Dendritic cell treated with granulocyte-macrophage colony-stimulating factor and Interleukin-4, amounts not matched to agents 40 ng/mL and 50 ng/mL, for 4 days (primary cell): ENCODE measurements at regions of chr7 and their contacts with region 1.

Region 1: DNA sequence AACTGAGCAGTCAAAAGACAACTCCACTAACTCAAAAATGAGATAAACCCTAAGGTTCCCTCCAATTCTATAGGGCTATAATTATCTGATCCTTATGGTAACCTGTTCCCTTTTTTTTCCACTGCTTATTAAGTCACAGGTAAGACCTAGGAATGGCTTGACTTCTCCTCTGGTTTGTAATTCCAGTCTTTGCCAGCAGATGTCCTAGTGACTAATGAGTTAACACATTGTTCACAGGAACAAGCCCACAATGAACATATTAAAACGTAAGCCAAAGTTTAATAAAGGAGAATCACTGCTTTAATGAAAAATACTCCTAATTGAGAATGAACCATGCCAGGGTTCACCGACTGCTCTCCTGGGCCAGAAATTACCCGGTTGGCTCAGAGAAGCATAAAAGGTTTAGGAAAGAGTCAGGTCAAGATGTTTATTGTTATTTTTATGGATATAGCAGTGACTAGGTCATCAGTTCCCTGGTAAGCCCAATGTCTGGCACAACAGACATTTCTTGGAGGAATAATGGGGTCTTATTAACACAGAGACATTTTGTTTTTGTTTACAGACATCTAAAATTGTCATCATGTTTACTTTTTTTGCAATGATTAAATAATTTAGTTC is 120.1 kb downstream of the ELAPOR2 start:
- H3K4me3 Mint-ChIP-seq: no peak overlapping the region
- H3K27ac Mint-ChIP-seq: no peak overlapping the region
- H3K4me1 Mint-ChIP-seq: no peaks in the 10 kb centered on the region
- H3K27me3 Mint-ChIP-seq: no peaks in the 10 kb centered on the region

Region 2: DNA sequence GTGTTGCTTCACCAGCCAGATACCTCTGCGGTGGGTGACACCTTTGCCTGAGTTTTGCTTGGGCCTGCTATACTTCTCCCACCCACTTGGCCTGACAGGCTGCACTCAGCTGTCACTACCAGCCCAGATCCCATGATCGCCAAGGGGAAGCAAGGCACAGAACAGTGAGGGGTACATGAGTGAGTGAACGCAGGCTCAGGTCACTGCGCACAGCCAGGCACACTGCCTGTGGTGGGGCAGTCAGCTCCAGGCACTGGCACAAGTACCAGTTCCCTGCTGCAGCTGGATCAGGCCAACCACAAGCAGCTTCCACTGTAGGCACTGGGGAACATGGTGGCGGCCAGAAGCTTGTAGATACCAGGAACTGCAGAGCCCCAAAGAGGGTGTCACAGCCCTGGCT is 737.5 kb before region 1 on chr7:
- intact Hi-C with region 1: no loop called
- H3K4me3 Mint-ChIP-seq: no peak overlapping the region
- H3K27ac Mint-ChIP-seq: no peak overlapping the region
- H3K4me1 Mint-ChIP-seq: no peaks in the 10 kb centered on the region
- H3K27me3 Mint-ChIP-seq: no peaks in the 10 kb centered on the region

Region 3: DNA sequence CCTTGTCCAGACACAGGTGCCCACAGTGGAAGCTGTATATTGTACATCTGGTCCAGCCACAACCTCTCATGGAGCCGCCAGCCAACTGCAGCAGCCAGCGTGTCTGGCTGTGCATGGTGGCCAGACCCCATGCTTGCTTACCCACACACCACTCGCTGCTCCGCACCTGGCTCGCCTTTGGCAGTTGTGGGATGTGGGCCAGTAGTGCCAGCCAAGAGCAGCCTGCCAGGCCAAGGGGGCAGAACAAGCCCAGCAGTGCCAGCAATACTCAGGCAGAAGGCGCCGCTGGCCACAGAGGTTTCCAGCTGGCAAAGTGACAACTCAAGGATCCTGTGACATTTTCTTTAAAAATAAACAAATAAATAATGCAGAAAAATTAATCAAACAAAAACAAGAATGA is 291.9 kb after region 1 on chr7:
- intact Hi-C with region 1: loop called (anchors 2 kb)
- H3K4me3 Mint-ChIP-seq: no peak overlapping the region
- H3K27ac Mint-ChIP-seq: no peak overlapping the region
- H3K4me1 Mint-ChIP-seq: peaks cover 5% of the 10 kb centered on the region
- H3K27me3 Mint-ChIP-seq: peaks cover 12% of the 10 kb centered on the region

Region 4: DNA sequence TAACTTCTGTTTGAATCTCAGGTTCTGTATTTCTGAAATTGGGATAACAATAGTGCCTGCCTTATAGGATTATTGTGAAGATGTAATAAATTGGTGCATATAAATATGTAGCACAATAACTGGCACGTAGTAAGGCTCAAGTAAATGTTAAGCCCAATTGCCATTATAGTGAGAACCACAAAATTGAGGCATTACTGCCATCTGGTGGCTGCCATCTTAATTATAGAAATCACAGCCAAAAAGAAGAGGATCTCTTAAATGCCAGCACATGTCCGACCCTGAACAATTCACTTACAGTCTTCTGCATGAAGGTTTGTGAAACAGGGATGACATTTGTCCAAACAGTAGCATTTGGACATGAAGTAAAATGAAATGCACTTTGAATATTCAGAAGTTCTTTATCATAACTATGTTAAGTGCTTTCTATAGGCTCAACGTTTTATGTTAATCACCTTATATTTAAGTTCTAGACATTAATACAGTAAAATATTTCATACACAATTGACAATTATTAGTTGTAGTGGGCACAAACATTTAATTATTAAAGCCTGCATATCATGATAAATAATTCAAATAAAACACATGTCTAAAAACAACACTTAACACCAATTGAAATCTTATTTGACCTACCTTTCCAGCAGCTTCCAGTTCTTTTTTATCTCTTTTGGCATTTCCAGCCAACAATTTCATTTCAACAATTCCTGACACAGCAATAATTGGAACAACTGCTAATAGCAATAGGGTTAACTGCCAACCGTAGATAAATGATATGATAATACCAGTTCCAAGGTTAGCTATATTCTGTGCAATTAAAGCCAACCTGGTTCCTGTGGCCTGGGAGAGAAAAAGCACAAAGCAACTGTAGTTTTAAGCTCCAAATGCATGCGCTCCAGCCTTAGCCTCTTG is 477.6 kb after region 1 on chr7:
- intact Hi-C with region 1: loop called (anchors 5 kb)
- H3K4me3 Mint-ChIP-seq: no peak overlapping the region
- H3K27ac Mint-ChIP-seq: no peak overlapping the region
- H3K4me1 Mint-ChIP-seq: no peaks in the 10 kb centered on the region
- H3K27me3 Mint-ChIP-seq: no peaks in the 10 kb centered on the region